Activated B cell treated with CpG ODN at 0.5 μM for 24 hours (primary cell): ENCODE measurements at regions of chr12 and their contacts with region 1.

Region 1: GRCh38 chr12:68012712-68013111 is 23.5 kb downstream of the IFNG-AS1 start:
- DNase-seq: no peak
- ATAC-seq: peak; percentile 90
- H3K4me3 Mint-ChIP-seq: peak overlapping the region; percentile 25
- H3K27ac Mint-ChIP-seq: peak overlapping the region; percentile 56
- H3K4me1 Mint-ChIP-seq: peaks cover 40% of the 10 kb centered on the region
- H3K27me3 Mint-ChIP-seq: no peaks in the 10 kb centered on the region
- CTCF ChIP-seq: no peak

Region 2: DNA sequence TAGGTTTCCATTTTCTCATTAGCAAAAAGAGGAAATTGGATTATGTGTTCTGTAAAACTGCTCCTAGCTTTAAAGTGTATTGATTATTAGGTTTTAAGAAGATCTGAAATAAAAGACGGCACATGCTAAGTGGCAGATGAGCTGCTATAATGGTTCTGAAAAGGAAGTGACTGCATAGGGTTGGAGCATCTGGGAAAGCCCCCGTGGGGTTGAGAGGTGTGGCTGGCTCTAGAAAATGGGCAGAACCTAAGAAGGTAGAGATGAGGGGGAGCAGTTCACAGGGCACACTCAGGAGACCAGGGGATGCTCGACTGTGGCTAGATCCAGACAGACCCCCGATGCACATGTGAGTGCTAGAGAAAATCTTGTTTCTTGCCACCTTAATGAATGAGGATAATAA is 21.6 kb before region 1 on chr12:
- CTCF ChIA-PET with region 1: interaction called, 3 read pairs
- POLR2A ChIA-PET with region 1: interaction called, 11 read pairs
- intact Hi-C with region 1: loop called (anchors 2 kb)
- DNase-seq: peak; percentile 32
- ATAC-seq: peak; percentile 90
- H3K4me3 Mint-ChIP-seq: peak overlapping the region; percentile 74
- H3K27ac Mint-ChIP-seq: peak overlapping the region; percentile 94
- H3K4me1 Mint-ChIP-seq: peaks cover 69% of the 10 kb centered on the region
- H3K27me3 Mint-ChIP-seq: no peaks in the 10 kb centered on the region
- CTCF ChIP-seq: no peak

Region 3: GRCh38 chr12:68001486-68002466 is 10.9 kb before region 1 on chr12:
- CTCF ChIA-PET with region 1: interaction called, 4 read pairs
- POLR2A ChIA-PET with region 1: interaction called, 3 read pairs
- intact Hi-C with region 1: loop called (anchors 1 kb)
- DNase-seq: no peak
- ATAC-seq: peak; percentile 37
- H3K4me3 Mint-ChIP-seq: no peak overlapping the region
- H3K27ac Mint-ChIP-seq: no peak overlapping the region
- H3K4me1 Mint-ChIP-seq: peaks cover 10% of the 10 kb centered on the region
- H3K27me3 Mint-ChIP-seq: no peaks in the 10 kb centered on the region
- CTCF ChIP-seq: no peak